Activated T-helper 1 cell treated with anti-CD3 and anti-CD28 coated beads, Interleukin-12 subunit alpha, Interleukin-12 subunit beta, Interleukin-2, Interleukin-4 antibody, amounts not matched to agents 30 ng/mL and 10 ng/mL and 1 ng/mL, durations not matched to agents 14 hours and 24 hours and 36 hours (primary cell): ENCODE measurements at regions of chr6 and their contacts with region 1.

Region 1: DNA sequence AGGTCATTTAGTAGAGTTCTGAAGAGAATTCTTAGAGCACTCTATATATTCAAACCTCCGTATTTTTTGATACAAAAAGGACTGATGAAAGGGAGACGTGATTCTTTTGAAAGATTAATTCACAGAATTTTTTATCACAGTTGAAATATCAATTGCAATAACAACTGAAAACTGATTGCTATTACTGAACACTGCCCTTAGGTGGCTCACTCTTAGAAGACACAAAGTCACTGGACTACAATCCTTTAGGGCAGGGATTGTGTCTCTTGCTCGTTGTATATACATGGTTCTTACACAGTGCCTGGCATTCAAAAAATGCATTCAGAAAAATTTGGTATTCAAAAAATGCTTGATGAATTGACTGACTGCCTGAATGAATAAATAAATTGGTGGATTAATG is 17.1 kb upstream of the CALHM6 start:
- DNase-seq: no peak
- H3K4me3 Mint-ChIP-seq: no peak overlapping the region
- H3K27ac Mint-ChIP-seq: no peak overlapping the region
- H3K4me1 Mint-ChIP-seq: peaks cover 26% of the 10 kb centered on the region
- H3K27me3 Mint-ChIP-seq: peaks cover 24% of the 10 kb centered on the region

Region 2: DNA sequence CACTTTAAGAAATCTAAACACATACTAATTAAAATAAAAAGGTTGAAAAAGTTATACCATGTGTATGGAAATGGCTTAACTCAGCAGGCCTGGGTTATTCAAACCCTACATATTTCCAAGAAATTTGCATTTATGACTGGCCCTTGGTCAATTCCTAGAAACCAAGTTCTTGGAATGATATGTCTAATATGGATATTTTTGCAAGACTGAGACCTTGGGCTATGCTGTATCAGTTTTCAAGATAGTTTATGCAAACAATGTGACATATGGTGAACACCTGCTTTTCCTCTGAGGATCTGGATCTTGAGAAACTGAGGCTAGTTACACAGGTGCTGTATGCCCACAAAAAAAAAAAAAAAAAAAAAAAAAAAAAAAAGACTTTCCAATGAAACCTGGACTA is 1564.4 kb before region 1 on chr6:
- intact Hi-C with region 1: no loop called
- DNase-seq: no peak
- H3K4me3 Mint-ChIP-seq: no peak overlapping the region
- H3K27ac Mint-ChIP-seq: no peak overlapping the region
- H3K4me1 Mint-ChIP-seq: no peaks in the 10 kb centered on the region
- H3K27me3 Mint-ChIP-seq: no peaks in the 10 kb centered on the region

Region 3: GRCh38 chr6:116461932-116462885 is 18.1 kb after region 1 on chr6:
- intact Hi-C with region 1: loop called (anchors 1 kb)
- DNase-seq: peak; percentile 67
- H3K4me3 Mint-ChIP-seq: peak overlapping the region; percentile 87
- H3K27ac Mint-ChIP-seq: peak overlapping the region; percentile 87
- H3K4me1 Mint-ChIP-seq: peaks cover 89% of the 10 kb centered on the region
- H3K27me3 Mint-ChIP-seq: peaks cover 1% of the 10 kb centered on the region

Region 4: GRCh38 chr6:116476002-116476678 is 32.0 kb after region 1 on chr6:
- intact Hi-C with region 1: loop called (anchors 2 kb)
- DNase-seq: peak; percentile 54
- H3K4me3 Mint-ChIP-seq: peak overlapping the region; percentile 7
- H3K27ac Mint-ChIP-seq: peak overlapping the region; percentile 69
- H3K4me1 Mint-ChIP-seq: peaks cover 31% of the 10 kb centered on the region
- H3K27me3 Mint-ChIP-seq: peaks cover 11% of the 10 kb centered on the region

Region 5: DNA sequence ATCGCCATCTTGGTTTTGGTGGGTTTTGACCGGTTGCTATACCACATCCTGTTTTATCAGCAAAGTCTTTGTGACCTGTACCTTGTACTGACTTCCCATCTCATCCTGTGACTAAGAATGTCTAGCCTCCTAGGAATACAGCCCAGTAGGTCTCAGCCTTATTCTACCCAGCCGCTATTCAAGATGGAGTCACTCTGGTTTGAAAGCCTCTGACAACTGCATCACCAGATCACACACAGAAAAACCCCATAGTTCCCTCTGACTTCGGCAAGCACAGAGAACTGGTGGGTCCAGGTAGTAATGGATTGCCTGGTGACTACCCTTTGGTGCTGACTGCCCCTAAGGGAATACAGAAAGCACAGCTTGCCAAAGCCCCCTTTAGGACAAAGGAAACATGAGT is 161.8 kb after region 1 on chr6:
- intact Hi-C with region 1: no loop called
- DNase-seq: no peak
- H3K4me3 Mint-ChIP-seq: no peak overlapping the region
- H3K27ac Mint-ChIP-seq: no peak overlapping the region
- H3K4me1 Mint-ChIP-seq: no peaks in the 10 kb centered on the region
- H3K27me3 Mint-ChIP-seq: peaks cover 1% of the 10 kb centered on the region